CD14-positive monocyte (primary cell): ENCODE measurements at regions of chr9 and their contacts with region 1.

Region 1: GRCh38 chr9:31868830-31869229 is 515.6 kb upstream of the ACO1 start:
- DNase-seq: no peak
- H3K4me3 ChIP-seq: no peak overlapping the region
- H3K4me3 Mint-ChIP-seq: no peak overlapping the region
- H3K27ac ChIP-seq: no peak overlapping the region
- H3K27ac Mint-ChIP-seq: no peak overlapping the region
- H3K4me1 ChIP-seq: no peaks in the 10 kb centered on the region
- H3K4me1 Mint-ChIP-seq: no peaks in the 10 kb centered on the region
- H3K27me3 ChIP-seq: no peaks in the 10 kb centered on the region
- H3K27me3 Mint-ChIP-seq: peaks cover 0 to 3% (median 2%) of the 10 kb centered on the region in 3 donors
- CTCF ChIP-seq: no peak

Region 2: GRCh38 chr9:31535651-31536050 is 333.2 kb before region 1 on chr9:
- intact Hi-C with region 1: loop called in 1 of 2 experiments (anchors 10 kb)
- DNase-seq: no peak
- H3K4me3 ChIP-seq: no peak overlapping the region
- H3K4me3 Mint-ChIP-seq: no peak overlapping the region
- H3K27ac ChIP-seq: no peak overlapping the region
- H3K27ac Mint-ChIP-seq: no peak overlapping the region
- H3K4me1 ChIP-seq: no peaks in the 10 kb centered on the region
- H3K4me1 Mint-ChIP-seq: no peaks in the 10 kb centered on the region
- H3K27me3 ChIP-seq: no peaks in the 10 kb centered on the region
- H3K27me3 Mint-ChIP-seq: no peaks in the 10 kb centered on the region
- CTCF ChIP-seq: no peak